Colonic mucosa (tissue), 4 donors: ENCODE measurements at regions of chr5 and their contacts with region 1.

Region 1: DNA sequence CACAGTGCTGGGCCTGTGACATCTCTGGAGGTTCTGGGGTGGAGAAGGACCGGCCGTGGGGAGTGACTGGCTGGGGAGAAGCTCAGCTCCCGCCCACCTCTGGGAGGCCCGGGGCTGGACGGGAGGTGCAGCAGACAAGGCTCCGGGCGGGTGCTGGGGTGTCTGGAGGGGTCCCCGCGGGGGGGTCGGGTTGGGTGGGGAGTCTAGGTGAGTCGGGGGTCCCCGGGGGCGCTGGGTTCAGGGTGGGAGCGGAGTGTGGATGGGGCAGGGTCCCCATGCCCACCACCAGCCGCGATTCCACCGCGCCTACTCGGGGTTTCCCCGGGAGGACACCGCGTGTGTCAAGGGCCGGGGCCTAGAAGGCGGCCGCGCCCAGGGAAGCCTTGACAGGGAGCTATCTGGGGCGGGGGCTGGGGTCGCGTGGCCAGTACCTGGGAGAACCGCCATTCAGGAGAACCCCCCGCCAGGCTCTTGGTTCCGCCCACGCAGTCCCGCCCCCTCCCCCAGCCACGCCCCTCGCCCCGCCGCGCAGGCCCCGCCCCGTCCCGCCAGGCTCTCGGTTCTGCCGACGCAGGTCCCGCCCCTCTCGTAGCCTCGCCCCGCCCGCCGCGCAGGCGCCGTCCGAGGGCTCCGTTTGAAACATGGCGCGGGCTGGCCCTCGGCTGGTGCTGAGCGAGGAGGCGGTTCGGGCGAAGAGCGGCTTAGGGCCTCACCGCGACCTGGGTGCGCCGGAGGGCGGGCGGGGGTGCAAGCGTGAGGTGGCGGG is at the start of gene CEP72:
- DNase-seq: peak; percentile 94
- H3K4me3 ChIP-seq: peak within 1 kb of the TSS; percentile 91
- H3K27ac ChIP-seq: no peak within 1 kb of the TSS
- H3K4me1 ChIP-seq: no peaks in the 10 kb centered on the region
- H3K27me3 ChIP-seq: no peaks in the 10 kb centered on the region
- CTCF ChIP-seq: no peak
- total RNA-seq, gene CEP72: 3.8 to 21.0 TPM

Region 2: GRCh38 chr5:136901-137300 is 475.0 kb before region 1 on chr5:
- intact Hi-C with region 1: no loop called
- DNase-seq: no peak
- H3K4me3 ChIP-seq: no peak overlapping the region
- H3K27ac ChIP-seq: no peak overlapping the region
- H3K4me1 ChIP-seq: no peaks in the 10 kb centered on the region
- H3K27me3 ChIP-seq: no peaks in the 10 kb centered on the region
- CTCF ChIP-seq: no peak

Region 3: DNA sequence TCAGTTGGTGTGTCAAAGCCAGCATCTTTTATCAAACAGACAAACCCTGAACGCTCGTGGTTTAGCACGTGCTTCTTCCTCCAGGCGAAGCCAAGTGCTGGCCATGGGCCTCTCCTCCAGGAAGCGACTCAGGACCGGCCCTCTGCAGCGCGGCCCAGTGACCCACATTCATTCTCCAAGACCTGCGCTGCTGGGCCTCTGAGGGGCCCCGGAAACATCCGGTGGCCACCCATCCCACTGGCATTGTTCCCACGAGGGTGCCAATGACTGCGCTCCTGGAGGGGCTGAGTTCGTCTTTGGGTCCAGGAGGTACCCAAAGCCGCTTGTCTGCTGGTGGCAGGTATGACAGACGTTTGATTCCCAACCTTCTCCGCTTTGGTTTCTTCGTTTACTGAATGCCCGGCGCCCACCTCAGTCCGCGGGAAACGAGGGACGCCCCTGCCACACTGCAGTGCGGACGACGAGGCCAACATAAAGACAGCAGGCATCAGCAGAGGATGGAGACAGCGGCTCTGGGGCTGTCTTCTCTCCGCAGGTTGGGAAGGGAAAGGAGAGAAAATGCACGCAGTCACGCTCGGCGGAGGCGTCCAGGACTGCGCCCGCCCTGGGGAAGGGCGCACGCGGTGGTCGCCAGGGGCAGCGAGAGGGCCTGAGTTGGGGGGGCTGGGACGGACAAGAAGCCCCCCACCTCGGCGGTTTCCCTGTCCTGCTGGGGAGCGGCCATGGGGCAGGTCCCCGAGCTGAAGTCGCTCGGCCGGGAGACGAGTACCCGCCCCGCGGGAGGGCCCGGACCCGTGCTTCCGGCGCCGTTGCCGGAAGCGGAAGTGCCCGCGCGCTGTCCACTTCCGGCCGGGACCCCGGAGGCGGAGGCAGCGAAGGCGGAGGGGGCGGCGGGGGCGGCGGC is 169.3 kb before region 1 on chr5 and contains the start of gene EXOC3:
- intact Hi-C with region 1: loop called (anchors 10 kb)
- DNase-seq: peak; percentile 82
- H3K4me3 ChIP-seq: peak within 1 kb of the TSS; percentile 93
- H3K27ac ChIP-seq: peak within 1 kb of the TSS; percentile 74
- H3K4me1 ChIP-seq: no peaks in the 10 kb centered on the region
- H3K27me3 ChIP-seq: no peaks in the 10 kb centered on the region
- CTCF ChIP-seq: no peak
- total RNA-seq, gene EXOC3: 52.0 to 58.7 TPM

Region 4: GRCh38 chr5:472656-473553 is 139.0 kb before region 1 on chr5:
- intact Hi-C with region 1: loop called (anchors 10 kb)
- DNase-seq: peak; percentile 85
- H3K4me3 ChIP-seq: peak overlapping the region; percentile 62
- H3K27ac ChIP-seq: peak overlapping the region; percentile 50
- H3K4me1 ChIP-seq: peaks cover 14% of the 10 kb centered on the region
- H3K27me3 ChIP-seq: peaks cover 33% of the 10 kb centered on the region
- CTCF ChIP-seq: no peak

Region 5: DNA sequence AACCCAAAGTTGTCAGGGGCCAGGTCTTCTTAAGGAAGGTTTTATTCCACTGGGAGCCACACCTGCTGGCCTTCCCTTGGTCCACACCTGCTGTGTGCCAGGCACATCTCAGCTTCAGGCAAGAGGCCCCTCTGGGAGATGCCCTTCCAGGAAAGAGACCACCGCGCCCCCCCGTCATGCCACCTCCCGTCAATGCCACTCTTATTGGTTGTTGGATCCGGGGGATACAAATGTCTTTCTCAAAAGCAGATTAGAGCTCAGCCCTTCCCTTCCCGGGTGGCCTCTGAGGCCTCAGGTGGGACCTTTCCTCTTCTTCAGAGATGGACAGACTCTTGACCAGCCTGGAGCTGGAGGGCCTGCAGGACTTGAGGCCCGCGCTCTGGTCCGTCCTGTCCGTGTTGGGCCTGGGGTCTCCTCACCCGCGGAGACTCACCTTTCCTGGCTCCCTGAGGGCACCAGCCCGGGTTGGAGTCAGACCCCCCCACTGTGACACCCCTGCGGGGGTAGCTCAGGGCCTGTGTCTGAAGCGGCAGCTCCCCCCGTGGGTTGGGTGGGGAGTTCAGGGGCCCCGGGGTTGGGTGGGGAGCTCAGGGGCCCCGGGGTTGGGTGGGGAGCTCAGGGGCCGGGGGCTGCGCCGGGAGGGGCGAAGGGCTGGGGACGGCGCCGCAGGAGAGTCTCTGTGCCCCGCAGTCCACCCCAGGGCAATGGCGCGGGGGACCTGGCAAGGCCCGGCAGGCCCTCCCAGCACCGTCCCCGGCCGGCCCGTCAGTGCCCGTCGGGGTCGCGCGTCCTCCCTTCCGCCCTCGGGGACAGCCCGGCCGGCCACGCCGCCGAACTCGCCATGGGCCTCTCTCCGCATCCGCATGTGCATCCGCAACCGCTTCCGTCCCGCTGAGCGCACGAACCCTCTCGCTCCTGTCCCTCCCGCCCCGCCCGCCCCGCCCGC is 84.0 kb before region 1 on chr5:
- intact Hi-C with region 1: no loop called
- DNase-seq: no peak
- H3K4me3 ChIP-seq: no peak overlapping the region
- H3K27ac ChIP-seq: no peak overlapping the region
- H3K4me1 ChIP-seq: peaks cover 4% of the 10 kb centered on the region
- H3K27me3 ChIP-seq: peaks cover 69% of the 10 kb centered on the region
- CTCF ChIP-seq: no peak